OCI-LY7 (cell line): ENCODE measurements at regions of chr11 and their contacts with region 1.

Region 1: GRCh38 chr11:2196970-2197770 is 25.6 kb upstream of the TH start:
- DNase-seq: peak; percentile 63
- H3K4me3 ChIP-seq: no peak overlapping the region
- H3K27ac ChIP-seq: no peak overlapping the region
- H3K4me1 ChIP-seq: no peaks in the 10 kb centered on the region
- CTCF ChIP-seq: peak; percentile 82

Region 2: DNA sequence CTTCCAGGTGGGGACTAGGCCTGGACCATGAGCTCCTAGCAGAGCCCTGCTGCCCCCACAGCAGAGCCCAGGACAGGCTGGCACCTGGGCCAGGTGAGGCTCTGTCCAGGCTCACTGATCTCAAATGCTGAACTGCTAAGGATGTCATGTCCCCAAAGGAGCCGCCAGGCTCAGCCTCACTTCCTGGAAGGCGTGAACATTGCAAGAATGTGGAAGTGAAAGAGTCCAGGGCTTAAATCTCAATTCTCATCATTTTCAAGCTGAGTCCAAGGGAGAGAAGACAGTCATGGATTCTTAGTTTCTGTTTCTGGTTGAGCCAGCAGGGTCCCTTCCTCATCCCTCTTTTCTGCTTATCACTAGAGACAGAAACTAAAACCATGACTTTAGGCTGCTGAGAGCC is 68.2 kb after region 1 on chr11:
- CTCF ChIA-PET with region 1: no interaction called
- POLR2A ChIA-PET with region 1: no interaction called
- intact Hi-C with region 1: loop called (anchors 1 kb)
- DNase-seq: peak; percentile 58
- H3K4me3 ChIP-seq: no peak overlapping the region
- H3K27ac ChIP-seq: no peak overlapping the region
- H3K4me1 ChIP-seq: peaks cover 11% of the 10 kb centered on the region
- CTCF ChIP-seq: no peak

Region 3: GRCh38 chr11:2305140-2305840 is 108.1 kb after region 1 on chr11:
- CTCF ChIA-PET with region 1: no interaction called
- POLR2A ChIA-PET with region 1: no interaction called
- intact Hi-C with region 1: loop called (anchors 1 kb)
- DNase-seq: peak; percentile 84
- H3K4me3 ChIP-seq: no peak overlapping the region
- H3K27ac ChIP-seq: no peak overlapping the region
- H3K4me1 ChIP-seq: peaks cover 8% of the 10 kb centered on the region
- CTCF ChIP-seq: peak; percentile 93

Region 4: DNA sequence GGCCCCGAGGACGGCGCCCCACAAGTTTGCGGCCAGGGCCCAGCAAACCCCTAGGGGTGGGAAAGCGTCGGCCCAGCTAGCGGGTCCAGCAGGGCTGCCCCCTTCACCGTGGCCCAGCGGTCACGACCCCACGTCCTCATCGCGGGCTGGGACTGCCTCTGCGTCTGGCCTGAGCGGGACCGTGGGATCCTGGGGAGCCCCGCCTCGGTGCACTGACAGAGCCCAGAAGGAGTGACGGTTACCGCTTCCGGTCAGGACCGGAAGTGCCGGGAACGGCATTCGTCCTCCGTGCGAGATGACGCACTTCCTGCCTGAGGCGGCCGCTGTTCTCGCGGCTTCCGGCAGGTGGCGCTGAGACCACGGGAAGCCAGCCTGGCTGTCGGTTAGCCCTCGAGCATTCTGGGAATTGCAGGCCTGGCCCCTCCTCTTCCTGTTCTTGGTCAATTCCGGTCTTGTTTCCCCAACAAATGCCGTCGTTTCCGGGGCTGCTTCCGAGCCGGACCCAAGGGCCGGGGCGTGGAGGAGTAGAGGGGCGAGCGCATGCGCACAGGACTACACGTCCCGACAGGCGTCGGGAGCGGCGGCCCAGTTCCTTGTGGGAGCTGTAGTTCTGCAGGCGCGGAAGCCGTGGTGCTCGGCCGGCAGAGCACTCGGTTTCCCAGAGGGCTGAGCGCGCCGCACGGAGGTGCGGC is 203.0 kb after region 1 on chr11 and contains the start of gene TSSC4:
- CTCF ChIA-PET with region 1: no interaction called
- POLR2A ChIA-PET with region 1: no interaction called
- intact Hi-C with region 1: loop called (anchors 5 kb)
- DNase-seq: peak; percentile 100
- H3K4me3 ChIP-seq: peak within 1 kb of the TSS; percentile 99
- H3K27ac ChIP-seq: peak within 1 kb of the TSS; percentile 80
- H3K4me1 ChIP-seq: peaks cover 23% of the 10 kb centered on the region
- CTCF ChIP-seq: peak; percentile 89
- total RNA-seq, gene TSSC4: 40.4 and 43.5 TPM in 2 replicates

Region 5: DNA sequence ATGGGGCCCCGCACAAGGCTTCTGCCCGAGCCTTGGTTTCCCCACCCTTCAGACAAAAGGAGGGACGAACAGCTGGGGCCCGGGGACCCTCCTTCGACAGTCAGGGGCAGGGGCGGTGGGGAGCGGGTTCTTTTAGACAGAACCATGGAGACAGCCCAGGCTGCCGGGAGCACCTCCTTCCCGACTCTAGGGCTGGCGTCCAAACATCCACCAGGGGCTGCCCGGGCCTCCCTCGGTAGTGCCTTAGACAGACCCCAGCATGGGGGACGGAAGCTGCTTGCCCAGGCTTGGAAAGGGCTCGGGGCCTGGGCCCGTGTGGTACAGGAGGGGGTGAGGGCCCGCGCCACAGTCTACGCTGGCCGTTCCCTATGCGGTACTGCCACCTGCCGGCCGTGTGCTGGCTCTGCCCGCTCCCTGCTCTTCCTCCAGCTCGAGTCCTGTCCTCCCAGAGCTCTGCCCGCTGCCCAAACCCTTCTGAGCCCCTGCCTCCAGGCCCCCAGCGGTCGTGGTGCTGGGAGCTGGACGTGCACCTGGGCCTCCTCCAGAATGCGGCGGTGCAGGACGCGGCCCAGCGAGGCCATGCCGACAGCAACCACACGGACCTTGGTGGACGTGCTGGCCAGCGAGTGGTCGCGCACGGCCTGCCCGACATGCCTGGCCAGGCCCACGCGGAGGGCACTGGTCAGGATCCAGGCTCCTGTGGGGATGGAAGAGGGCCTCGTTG is 223.5 kb after region 1 on chr11:
- CTCF ChIA-PET with region 1: interaction called, 3 read pairs
- POLR2A ChIA-PET with region 1: no interaction called
- intact Hi-C with region 1: loop called (anchors 1 kb)
- DNase-seq: peak; percentile 77
- H3K4me3 ChIP-seq: no peak overlapping the region
- H3K27ac ChIP-seq: no peak overlapping the region
- H3K4me1 ChIP-seq: no peaks in the 10 kb centered on the region
- CTCF ChIP-seq: peak; percentile 83